ENCODE measurements at regions of chr6 and their contacts with region 1.

Region 1: GRCh38 chr6:44246663-44247337 is at the start of gene HSP90AB1:
- DNase-seq: peak; percentile 97 to 99
- ATAC-seq: peak; percentile 86 to 88
- H3K4me3 ChIP-seq: peak within 1 kb of the TSS; percentile 78 to 98 (median 88)
- H3K27ac ChIP-seq: peak within 1 kb of the TSS; percentile 93 to 99 (median 98)
- H3K4me1 ChIP-seq: peaks cover 25 to 27% of the 10 kb centered on the region in 2 donors
- H3K27me3 ChIP-seq: no peaks in the 10 kb centered on the region
- CTCF ChIP-seq: peak in 1 of 5 experiments; percentile 26
- POLR2A ChIP-seq: peak; percentile 99
- total RNA-seq, gene HSP90AB1: 878 to 1,576 (median 1,106) TPM

Region 2: DNA sequence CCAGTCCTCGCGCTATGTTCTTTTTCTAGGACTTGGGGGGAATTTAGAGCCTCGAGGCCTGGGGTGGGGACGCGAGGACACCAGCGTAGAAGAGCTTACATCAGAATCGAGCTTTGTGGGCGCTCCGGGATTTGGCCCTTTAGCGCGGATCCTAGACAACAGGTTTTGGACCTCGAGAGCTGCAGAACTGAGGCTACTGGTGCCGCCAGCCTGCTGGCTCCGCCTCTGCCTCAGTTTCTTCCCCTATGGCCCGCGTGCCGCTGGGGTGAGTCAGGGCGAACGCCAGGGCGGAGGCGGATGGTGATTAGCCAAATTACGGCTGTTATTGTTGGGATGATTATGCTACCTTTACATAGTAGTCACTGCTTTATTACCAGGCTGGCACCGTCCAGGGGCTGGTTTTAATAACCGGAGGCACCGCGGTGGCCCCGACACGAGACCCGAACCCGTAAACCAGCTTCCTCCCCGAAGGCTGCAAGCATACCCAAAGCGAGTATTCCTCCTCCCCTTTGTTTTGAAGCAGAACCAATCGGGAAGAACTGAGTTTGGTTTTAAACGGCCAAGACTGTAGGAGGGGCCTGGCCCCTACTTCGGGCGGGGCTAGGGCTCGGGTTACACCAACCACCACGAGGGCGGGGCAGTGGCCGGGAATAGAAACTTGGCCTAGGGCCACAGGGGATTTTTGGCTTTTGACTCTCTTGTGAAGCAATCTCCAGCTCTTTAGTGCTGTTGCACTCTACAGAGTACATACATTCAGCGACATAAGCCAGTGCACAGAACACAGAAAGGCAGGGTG is 617.1 kb before region 1 on chr6:
- in situ Hi-C with region 1: no loop called
- intact Hi-C with region 1: loop called (anchors 5 kb)
- DNase-seq: peak; percentile 95 to 97
- ATAC-seq: peak; percentile 90 to 92
- H3K4me3 ChIP-seq: peak overlapping the region; percentile 79 to 97 (median 84)
- H3K27ac ChIP-seq: peak overlapping the region; percentile 97 to 100 (median 100)
- H3K4me1 ChIP-seq: peaks cover 21 to 22% of the 10 kb centered on the region in 2 donors
- H3K27me3 ChIP-seq: no peaks in the 10 kb centered on the region
- CTCF ChIP-seq: no peak
- POLR2A ChIP-seq: peak; percentile 79 to 94

Region 3: DNA sequence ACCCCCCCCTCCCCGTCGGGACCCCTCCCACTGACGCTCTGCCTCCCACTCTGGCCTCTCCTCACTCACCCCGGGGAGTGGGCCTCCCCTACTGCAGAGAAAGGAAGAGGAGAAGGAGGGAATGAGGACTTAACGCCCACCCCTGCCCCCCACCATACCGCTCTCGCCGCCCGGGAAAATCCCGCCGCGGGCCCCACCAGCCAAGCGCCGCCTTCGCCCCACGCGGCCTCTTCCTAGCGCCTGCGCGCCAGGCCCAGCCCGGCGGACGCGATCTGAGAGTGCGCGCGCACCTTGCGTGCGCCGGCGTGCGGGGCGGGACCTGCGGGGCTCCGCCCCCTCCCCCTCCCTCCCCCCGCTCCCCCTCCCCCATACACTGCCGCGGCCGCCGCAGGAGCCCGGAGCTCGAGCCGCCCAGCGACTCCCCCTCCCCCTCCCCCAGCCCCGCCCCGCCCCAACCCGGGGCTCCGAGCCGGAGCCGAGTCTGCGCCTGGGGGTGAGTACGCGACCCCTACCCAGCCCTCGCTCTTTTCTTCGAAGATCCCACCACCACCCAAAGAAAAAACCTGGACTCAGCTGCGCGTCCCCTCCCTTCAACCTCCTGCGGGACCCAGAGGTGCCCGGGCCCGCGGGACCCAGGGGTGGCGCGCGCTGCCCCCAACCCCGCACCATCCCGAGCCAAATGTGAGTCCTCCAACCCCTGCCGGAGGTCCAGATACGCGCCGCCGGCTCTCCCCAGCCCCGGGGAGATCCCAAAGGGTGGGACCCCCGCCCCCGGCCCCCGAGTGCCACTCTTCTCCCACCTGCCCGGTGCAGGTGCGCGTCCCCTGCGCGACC is 119.4 kb before region 1 on chr6 and contains the starts of genes MRPL14 and TMEM63B:
- in situ Hi-C with region 1: loop called in 1 of 4 experiments (anchors 25 kb)
- intact Hi-C with region 1: loop called (anchors 5 kb)
- DNase-seq: peak; percentile 71 to 84
- ATAC-seq: peak; percentile 68 to 78
- H3K4me3 ChIP-seq: peak within 1 kb of the TSS; percentile 78 to 99 (median 94)
- H3K27ac ChIP-seq: peak within 1 kb of the TSS; percentile 97 to 100 (median 99)
- H3K4me1 ChIP-seq: peaks cover 52 to 59% of the 10 kb centered on the region in 2 donors
- H3K27me3 ChIP-seq: no peaks in the 10 kb centered on the region
- CTCF ChIP-seq: no peak
- POLR2A ChIP-seq: peak; percentile 91 to 93
- total RNA-seq, gene MRPL14: 100 to 180 (median 152) TPM
- total RNA-seq, gene TMEM63B: 27.2 to 71.9 (median 43.7) TPM

Region 4: DNA sequence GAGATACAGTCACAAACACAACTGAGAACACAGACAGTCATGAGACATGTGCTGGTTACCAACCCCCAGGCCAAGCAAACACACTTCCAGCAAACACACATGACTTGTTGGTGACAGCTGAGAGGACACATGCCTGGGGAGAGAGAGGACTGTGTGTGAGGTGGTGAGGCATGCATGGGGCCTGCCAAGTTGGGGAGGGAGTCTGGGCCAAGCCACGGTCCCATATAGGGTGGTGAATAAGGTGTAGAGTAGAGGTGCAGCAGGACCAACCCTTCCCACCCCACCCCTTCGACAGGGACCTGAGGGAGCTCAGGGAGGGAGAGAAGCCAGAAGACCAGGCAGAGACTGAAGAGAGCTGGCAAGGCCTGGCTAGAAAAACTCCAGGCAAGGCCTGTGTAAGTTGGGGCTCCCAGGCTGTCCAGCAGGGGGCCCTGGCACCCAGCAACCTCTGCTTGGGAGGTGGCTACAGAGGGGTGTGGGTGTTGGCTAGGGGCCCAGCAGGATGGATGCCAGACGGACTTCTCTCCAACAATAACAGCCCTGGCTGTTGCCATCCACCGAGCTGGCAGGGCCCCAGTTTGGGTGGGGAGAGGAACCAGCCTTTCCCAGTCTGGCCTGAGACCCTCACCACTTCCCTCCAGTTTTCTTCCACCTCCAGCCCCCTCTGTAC is 25.4 kb before region 1 on chr6:
- in situ Hi-C with region 1: no loop called
- intact Hi-C with region 1: loop called (anchors 1 kb)
- DNase-seq: peak; percentile 94 to 96
- ATAC-seq: peak; percentile 77 to 79
- H3K4me3 ChIP-seq: peak overlapping the region in 2 of 4 donors; percentile 21 to 62
- H3K27ac ChIP-seq: peak overlapping the region; percentile 95 to 99 (median 98)
- H3K4me1 ChIP-seq: peaks cover 71 to 88% of the 10 kb centered on the region in 2 donors
- H3K27me3 ChIP-seq: no peaks in the 10 kb centered on the region
- CTCF ChIP-seq: peak; percentile 51 to 89 (median 72)
- POLR2A ChIP-seq: peak; percentile 49 to 58

Region 5: DNA sequence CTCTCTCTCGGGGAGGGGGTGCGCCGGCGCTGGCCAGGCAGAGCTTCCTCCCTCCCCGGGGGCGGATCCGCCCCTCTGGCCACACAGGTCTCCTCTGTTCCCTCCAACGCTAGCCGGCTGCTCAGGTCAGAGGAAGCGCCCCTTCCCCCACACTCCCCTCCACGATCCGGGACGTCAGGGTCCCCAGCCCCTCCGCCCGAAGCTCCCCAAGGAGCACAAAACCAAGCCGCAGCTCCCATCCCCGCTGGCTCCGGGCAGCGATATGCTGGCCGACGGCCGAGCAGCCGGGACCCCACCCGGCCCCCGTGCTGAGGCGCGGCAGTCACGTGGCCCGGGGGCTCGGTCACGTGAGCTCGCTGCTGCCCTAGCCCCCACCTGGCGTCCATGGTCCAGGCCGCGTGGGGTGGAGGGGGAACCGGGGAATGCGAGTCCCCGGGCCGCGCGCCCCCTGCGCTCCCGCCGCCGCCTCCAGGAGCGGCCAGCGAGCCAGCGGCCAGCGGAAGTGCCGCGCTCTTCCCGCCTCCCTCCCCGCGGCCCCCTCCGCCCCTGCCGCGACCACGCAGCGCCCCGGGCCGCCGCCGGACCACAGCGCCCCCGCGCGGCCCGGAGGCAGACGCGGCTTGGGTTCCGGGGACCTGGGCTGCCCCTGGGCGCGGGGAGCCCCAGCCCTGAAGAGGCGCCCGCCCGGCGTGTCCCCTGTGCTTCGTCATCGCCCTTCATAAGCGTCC is 10.4 kb after region 1 on chr6 and contains the start of gene SLC35B2:
- in situ Hi-C with region 1: no loop called
- intact Hi-C with region 1: loop called (anchors 1 kb)
- DNase-seq: peak in 1 of 2 donors; percentile 58
- ATAC-seq: peak; percentile 73 to 81
- H3K4me3 ChIP-seq: peak within 1 kb of the TSS; percentile 77 to 99 (median 88)
- H3K27ac ChIP-seq: peak within 1 kb of the TSS; percentile 87 to 97 (median 92)
- H3K4me1 ChIP-seq: peaks cover 8 to 12% of the 10 kb centered on the region in 2 donors
- H3K27me3 ChIP-seq: no peaks in the 10 kb centered on the region
- CTCF ChIP-seq: peak; percentile 54 to 99 (median 90)
- POLR2A ChIP-seq: peak; percentile 75 to 77
- total RNA-seq, gene SLC35B2: 14.9 to 35.9 (median 21.4) TPM

Measured in gastrocnemius medialis (tissue), 4 donors.